ENCODE measurements at regions of chr5 and their contacts with region 1.

Region 1: DNA sequence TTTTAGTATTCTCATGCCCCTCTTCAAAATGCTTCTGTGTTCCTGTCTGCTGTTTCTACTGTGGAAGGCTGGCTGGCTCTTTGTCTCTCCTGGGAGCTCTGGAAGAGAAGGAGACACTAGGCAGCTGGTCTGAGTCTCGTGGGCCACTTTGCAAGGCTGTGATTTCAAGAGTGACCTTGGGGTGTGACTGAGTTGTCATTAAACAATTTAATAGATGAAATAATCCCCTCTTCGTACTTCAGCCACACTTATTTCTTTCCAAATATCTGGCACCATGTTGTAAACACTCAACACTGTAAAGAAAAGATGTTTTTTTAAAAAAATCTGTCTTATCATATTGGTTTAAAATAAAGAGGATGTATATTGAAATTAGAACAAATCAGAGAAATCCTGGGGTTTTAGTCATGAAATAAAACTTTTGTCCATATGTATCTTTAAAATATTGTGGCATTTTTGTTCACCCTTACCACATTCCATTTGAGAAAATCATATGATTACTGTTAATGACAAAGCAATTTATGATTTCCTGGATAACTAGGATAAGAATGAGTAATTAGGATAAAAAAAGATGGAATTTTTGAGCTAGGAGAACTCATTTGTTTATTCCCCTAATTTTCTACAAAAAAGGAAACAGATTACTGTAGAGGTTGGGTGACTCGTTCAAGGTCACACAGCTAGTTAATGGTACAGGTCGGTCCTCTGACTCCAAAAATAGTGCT is 200.8 kb downstream of the MAT2B start:
- DNase-seq: no peak
- H3K4me3 ChIP-seq: no peak overlapping the region
- H3K27ac ChIP-seq: no peak overlapping the region
- H3K4me1 ChIP-seq: no peaks in the 10 kb centered on the region
- H3K27me3 ChIP-seq: no peaks in the 10 kb centered on the region
- CTCF ChIP-seq: no peak
- EP300 ChIP-seq: no peak
- POLR2A ChIP-seq: no peak

Region 2: DNA sequence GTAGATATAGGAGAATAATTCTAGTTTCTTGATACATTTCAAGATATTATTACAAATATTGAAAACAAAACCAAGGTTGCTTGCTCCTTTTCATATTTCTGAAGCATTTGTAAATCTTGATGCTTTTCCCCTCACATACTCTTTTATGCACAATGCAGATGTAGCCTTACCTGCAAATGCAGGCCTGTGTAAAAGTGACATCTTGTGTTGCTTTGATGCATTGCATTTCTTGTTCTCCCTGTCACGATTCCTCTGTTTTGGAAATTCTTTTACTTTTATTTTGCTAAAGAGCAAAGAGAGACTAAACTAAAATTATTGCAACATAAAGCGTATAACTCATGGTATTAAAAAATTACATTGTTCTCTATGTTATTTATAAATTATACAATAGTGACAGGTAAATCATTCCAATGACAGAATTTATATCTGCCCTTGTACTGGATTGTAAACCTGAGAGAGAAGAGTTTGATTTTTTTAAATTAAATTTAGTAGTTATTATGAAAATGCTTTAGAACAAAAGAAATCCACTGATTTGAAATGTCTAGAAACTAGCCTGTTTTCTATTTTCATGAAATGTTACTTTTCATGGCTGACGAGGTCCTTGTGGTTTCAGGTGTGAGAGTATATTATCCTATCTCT is 769.2 kb after region 1 on chr5:
- in situ Hi-C with region 1: loop called in 1 of 4 experiments (anchors 25 kb)
- intact Hi-C with region 1: no loop called
- DNase-seq: no peak
- H3K4me3 ChIP-seq: no peak overlapping the region
- H3K27ac ChIP-seq: no peak overlapping the region
- H3K4me1 ChIP-seq: no peaks in the 10 kb centered on the region
- H3K27me3 ChIP-seq: no peaks in the 10 kb centered on the region
- CTCF ChIP-seq: peak in 4 of 5 experiments; percentile 17 to 31 (median 26)
- EP300 ChIP-seq: no peak
- POLR2A ChIP-seq: no peak

Region 3: DNA sequence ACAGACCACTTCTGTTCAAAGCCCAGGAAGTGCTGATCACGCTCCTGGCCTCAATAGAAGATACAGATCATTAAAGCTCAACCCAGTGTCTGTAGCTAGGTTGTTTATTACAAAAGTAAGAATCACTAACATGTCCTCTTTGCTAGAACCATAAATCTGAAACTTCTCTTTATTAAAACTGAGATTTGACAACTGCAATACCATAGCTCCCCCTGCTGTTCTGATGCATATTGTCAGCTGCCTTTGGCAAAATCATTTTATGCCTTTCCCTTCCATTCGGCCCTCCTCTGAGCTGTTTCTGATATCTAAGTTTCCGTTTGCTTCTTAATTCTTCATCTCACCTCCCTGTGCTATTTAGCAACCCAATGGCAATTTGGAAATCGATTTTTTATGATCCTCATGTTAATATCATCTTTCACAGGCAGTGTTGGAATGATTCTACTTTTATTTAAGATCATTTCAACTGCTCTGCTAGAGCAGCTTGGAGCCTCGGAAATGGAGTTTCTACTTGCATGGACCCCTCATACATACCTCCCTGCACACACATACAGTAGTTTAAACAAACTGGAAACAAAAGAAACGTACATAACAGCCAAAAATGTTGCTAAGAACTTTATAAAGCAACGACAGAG is 798.0 kb after region 1 on chr5:
- in situ Hi-C with region 1: loop called in 2 of 4 experiments (anchors 10 to 25 kb)
- intact Hi-C with region 1: no loop called
- DNase-seq: peak; percentile 15
- H3K4me3 ChIP-seq: no peak overlapping the region
- H3K27ac ChIP-seq: no peak overlapping the region
- H3K4me1 ChIP-seq: no peaks in the 10 kb centered on the region
- H3K27me3 ChIP-seq: no peaks in the 10 kb centered on the region
- CTCF ChIP-seq: peak; percentile 70 to 78 (median 77)
- EP300 ChIP-seq: no peak
- POLR2A ChIP-seq: no peak